Panc1 (cell line): ENCODE measurements at regions of chr16 and their contacts with region 1.

Region 1: GRCh38 chr16:2799866-2800239 is 1.6 kb downstream of the PRSS41 start:
- DNase-seq: peak; percentile 60
- ATAC-seq: peak; percentile 81
- H3K4me3 ChIP-seq: no peak overlapping the region
- H3K27ac ChIP-seq: no peak overlapping the region
- H3K4me1 ChIP-seq: no peaks in the 10 kb centered on the region
- H3K27me3 ChIP-seq: no peaks in the 10 kb centered on the region
- CTCF ChIP-seq: no peak

Region 2: DNA sequence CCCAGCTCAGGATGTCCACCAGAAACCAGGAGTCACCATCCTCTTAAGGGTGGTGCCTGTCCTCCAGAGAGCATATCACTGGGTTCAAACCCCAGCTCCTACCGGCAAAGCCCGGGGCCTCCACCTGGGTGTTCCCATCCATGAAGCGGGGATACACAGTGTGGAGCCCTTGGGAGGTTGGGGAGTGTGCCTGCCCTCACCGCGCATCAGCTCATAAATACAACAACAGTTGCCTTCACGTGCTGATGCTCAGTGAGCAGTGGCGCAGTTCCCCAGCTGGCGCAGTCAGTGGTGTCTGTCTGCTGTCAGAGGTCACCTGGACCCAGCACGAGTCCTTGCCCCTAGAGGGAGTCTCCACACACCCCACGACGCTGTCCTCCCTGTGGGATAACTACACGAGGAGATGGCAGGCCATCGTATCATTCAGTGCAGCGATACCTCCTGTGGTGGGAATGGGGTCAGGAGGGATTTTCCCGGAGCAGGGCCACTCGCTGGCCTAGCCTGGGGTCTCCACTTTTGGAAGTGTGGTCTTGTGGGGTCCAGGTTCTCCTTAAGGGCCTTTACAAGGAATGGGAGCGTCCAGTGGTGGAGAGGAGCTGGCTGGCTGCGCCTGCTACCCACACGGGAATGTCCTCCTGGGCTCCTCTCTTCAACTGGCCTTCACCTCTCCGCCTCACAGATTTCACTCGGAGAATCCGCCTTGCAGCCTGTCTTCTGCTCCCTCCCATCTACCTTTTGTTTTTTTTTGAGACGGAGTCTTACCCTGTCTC is 20.5 kb before region 1 on chr16:
- CTCF ChIA-PET with region 1: no interaction called
- POLR2A ChIA-PET with region 1: interaction called, 10 read pairs
- in situ Hi-C with region 1: no loop called
- intact Hi-C with region 1: no loop called
- DNase-seq: no peak
- ATAC-seq: no peak
- H3K4me3 ChIP-seq: no peak overlapping the region
- H3K27ac ChIP-seq: peak overlapping the region; percentile 99
- H3K4me1 ChIP-seq: peaks cover 24% of the 10 kb centered on the region
- H3K27me3 ChIP-seq: no peaks in the 10 kb centered on the region
- CTCF ChIP-seq: no peak; the same call in 1 of the 2 replicates

Region 3: DNA sequence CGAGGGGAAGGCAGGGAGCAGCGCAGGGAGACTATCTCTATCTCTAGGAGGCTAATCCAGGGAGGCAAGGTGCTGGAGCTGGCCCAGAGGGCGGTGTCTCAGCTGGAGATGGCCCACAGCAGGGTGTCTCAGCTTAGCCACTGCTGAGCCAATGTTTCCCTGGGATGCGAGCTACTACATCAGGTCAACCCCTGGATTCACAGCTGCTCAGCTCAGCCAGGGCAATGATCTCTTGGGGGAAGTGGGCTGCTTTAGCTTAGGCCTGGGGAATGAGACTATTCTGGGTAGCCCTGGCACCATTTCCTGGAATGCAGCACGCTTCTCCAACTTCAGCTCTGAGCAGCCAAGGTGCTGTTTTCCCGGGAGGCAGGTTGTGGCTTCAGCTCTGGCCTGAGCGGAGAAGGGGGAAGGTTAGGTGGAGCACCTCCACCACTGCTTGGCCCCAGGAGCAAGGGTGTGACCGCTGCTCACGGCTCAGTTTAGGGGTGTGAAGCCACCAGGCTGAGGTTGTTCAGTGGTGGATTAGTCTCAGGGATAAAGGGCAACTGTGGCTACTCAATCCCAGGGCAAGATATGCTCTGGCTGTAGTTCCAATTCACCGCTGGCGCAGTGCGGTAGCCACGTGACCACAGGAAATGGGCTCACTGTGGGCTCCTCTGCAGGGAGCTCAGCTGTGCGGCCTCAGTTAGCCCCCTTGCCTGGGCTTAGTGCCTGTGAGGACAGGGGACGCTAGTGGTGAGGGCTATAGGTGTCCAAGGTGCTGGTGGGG is 12.0 kb after region 1 on chr16:
- CTCF ChIA-PET with region 1: interaction called, 4 read pairs
- POLR2A ChIA-PET with region 1: interaction called, 11 read pairs
- in situ Hi-C with region 1: no loop called
- intact Hi-C with region 1: no loop called
- DNase-seq: no peak
- ATAC-seq: peak; percentile 77
- H3K4me3 ChIP-seq: no peak overlapping the region
- H3K27ac ChIP-seq: peak overlapping the region; percentile 62
- H3K4me1 ChIP-seq: peaks cover 13% of the 10 kb centered on the region
- H3K27me3 ChIP-seq: no peaks in the 10 kb centered on the region
- CTCF ChIP-seq: no peak

Region 4: GRCh38 chr16:2926650-2927646 is 127.1 kb after region 1 on chr16:
- CTCF ChIA-PET with region 1: no interaction called
- POLR2A ChIA-PET with region 1: no interaction called
- in situ Hi-C with region 1: no loop called
- intact Hi-C with region 1: no loop called
- DNase-seq: no peak
- ATAC-seq: peak; percentile 91
- H3K4me3 ChIP-seq: peak overlapping the region in 1 of 2 experiments; percentile 37; a peak in 2 of 4 replicates
- H3K27ac ChIP-seq: no peak overlapping the region
- H3K4me1 ChIP-seq: no peaks in the 10 kb centered on the region
- H3K27me3 ChIP-seq: no peaks in the 10 kb centered on the region
- CTCF ChIP-seq: peak; percentile 96